A549 (cell line): ENCODE measurements at regions of chr7 and their contacts with region 1.

Region 1: GRCh38 chr7:31134246-31135188 is 82.4 kb downstream of the ADCYAP1R1 start:
- DNase-seq: peak; percentile 67 to 76
- ATAC-seq: peak; percentile 98 to 100
- H3K4me3 ChIP-seq: no peak overlapping the region
- H3K27ac ChIP-seq: no peak overlapping the region
- H3K4me1 ChIP-seq: no peaks in the 10 kb centered on the region
- CTCF ChIP-seq: peak; percentile 79
- EP300 ChIP-seq: no peak
- POLR2A ChIP-seq: no peak
- RAD21 ChIP-seq: peak; percentile 78 to 82

Region 2: GRCh38 chr7:30920584-30921539 is 213.7 kb before region 1 on chr7:
- CTCF ChIA-PET with region 1: no interaction called
- POLR2A ChIA-PET with region 1: no interaction called
- DNase-seq: peak in 1 of 2 experiments; percentile 27
- ATAC-seq: peak in 1 of 2 experiments; percentile 56; a peak in 3 of 6 replicates
- H3K4me3 ChIP-seq: no peak overlapping the region
- H3K27ac ChIP-seq: no peak overlapping the region
- H3K4me1 ChIP-seq: peaks cover 12% of the 10 kb centered on the region; the same call in 2 of the 3 replicates
- CTCF ChIP-seq: no peak
- EP300 ChIP-seq: no peak
- POLR2A ChIP-seq: no peak
- RAD21 ChIP-seq: no peak

Region 3: DNA sequence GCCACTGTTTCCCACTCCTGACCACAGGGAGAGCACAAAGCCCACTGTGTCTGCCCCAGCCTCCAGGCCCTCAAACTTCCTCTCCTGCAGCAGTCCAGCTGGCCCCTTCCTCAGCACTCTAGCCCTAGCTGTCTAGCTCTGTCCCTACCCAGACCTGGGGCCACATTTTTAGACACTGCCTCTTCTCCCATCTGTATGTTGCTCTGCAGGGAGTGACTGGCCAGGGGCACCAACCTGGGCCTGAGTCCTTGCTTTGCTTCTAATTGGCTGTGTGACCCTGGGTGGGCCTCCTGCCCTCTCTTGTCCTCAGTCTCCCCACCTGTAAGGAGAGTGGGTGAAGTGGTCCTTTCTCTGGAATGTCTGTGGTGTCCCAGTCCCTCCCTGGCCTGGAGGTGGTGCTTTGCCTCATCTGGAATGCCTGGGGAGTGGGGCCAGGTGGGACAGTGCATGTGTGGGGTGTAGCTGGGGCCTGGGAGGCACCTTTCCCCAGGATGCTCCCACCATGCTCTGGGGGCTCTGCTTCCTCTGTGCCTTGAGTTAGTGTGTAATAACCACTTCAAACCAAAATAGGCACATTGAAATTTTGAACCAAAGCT is 197.8 kb before region 1 on chr7:
- CTCF ChIA-PET with region 1: no interaction called
- POLR2A ChIA-PET with region 1: no interaction called
- DNase-seq: no peak
- ATAC-seq: no peak
- H3K4me3 ChIP-seq: no peak overlapping the region
- H3K27ac ChIP-seq: no peak overlapping the region
- H3K4me1 ChIP-seq: 0 out of 3 replicates have a peak, but pooled peaks cover 3% of the 10 kb centered on the region
- CTCF ChIP-seq: no peak
- EP300 ChIP-seq: no peak
- POLR2A ChIP-seq: no peak
- RAD21 ChIP-seq: no peak

Region 4: DNA sequence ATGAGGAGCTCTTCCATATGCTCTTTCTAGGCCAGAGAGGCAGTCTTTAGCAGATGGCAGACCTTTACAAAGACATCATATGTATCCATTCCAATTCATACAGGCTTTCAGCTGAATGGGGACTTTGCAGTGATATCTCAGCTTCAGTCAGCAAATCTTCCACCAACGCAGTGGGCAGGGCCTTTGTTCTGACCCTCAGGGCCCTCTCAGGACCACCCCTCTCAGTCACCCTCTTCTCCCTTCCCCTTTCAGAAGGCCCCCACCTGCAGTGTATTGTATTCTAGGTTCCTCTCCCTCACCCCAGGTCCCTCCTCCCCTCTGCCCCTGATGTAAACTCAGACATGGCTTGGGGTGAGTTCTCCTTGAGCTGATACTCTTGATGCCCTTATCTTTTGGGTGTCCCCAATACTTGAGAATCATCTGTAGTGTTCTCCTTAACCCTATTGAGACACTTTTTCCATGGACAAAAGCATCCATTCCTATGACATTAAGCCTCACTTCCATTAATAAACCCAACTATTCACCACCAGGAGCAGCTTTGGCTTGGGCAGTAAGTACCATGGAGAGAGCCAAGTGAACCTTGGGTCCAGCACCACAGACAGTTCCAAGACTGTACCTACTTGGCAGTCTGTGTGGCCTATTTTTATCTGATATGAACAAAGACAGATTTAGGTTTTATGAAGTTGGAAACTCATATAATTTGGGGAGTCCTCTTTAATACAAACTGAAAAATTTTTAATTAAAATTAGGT is 19.7 kb before region 1 on chr7:
- CTCF ChIA-PET with region 1: interaction called, 15 read pairs
- POLR2A ChIA-PET with region 1: no interaction called
- DNase-seq: peak in 1 of 2 experiments; percentile 26
- ATAC-seq: peak; percentile 54 to 68; a peak in 1 of 6 replicates
- H3K4me3 ChIP-seq: no peak overlapping the region
- H3K27ac ChIP-seq: no peak overlapping the region
- H3K4me1 ChIP-seq: no peaks in the 10 kb centered on the region
- CTCF ChIP-seq: no peak
- EP300 ChIP-seq: no peak
- POLR2A ChIP-seq: no peak
- RAD21 ChIP-seq: no peak

Region 5: GRCh38 chr7:31192986-31193385 is 58.5 kb after region 1 on chr7:
- CTCF ChIA-PET with region 1: interaction called, 16 read pairs
- POLR2A ChIA-PET with region 1: no interaction called
- DNase-seq: peak; percentile 61 to 66
- ATAC-seq: peak; percentile 100
- H3K4me3 ChIP-seq: no peak overlapping the region
- H3K27ac ChIP-seq: no peak overlapping the region
- H3K4me1 ChIP-seq: no peaks in the 10 kb centered on the region
- CTCF ChIP-seq: peak; percentile 76
- EP300 ChIP-seq: no peak
- POLR2A ChIP-seq: no peak
- RAD21 ChIP-seq: peak; percentile 85 to 86

Region 6: GRCh38 chr7:31234836-31235605 is 100.5 kb after region 1 on chr7:
- CTCF ChIA-PET with region 1: no interaction called
- POLR2A ChIA-PET with region 1: no interaction called
- DNase-seq: no peak
- ATAC-seq: no peak
- H3K4me3 ChIP-seq: no peak overlapping the region
- H3K27ac ChIP-seq: no peak overlapping the region
- H3K4me1 ChIP-seq: no peaks in the 10 kb centered on the region
- CTCF ChIP-seq: no peak
- EP300 ChIP-seq: no peak
- POLR2A ChIP-seq: no peak
- RAD21 ChIP-seq: no peak

Region 7: GRCh38 chr7:31633894-31634494 is 499.5 kb after region 1 on chr7:
- CTCF ChIA-PET with region 1: interaction called, 107 read pairs
- POLR2A ChIA-PET with region 1: no interaction called
- DNase-seq: peak; percentile 47 to 69
- ATAC-seq: peak; percentile 96
- H3K4me3 ChIP-seq: no peak overlapping the region
- H3K27ac ChIP-seq: no peak overlapping the region
- H3K4me1 ChIP-seq: no peaks in the 10 kb centered on the region
- CTCF ChIP-seq: peak; percentile 76
- EP300 ChIP-seq: no peak
- POLR2A ChIP-seq: no peak
- RAD21 ChIP-seq: peak; percentile 87 to 92

Region 8: DNA sequence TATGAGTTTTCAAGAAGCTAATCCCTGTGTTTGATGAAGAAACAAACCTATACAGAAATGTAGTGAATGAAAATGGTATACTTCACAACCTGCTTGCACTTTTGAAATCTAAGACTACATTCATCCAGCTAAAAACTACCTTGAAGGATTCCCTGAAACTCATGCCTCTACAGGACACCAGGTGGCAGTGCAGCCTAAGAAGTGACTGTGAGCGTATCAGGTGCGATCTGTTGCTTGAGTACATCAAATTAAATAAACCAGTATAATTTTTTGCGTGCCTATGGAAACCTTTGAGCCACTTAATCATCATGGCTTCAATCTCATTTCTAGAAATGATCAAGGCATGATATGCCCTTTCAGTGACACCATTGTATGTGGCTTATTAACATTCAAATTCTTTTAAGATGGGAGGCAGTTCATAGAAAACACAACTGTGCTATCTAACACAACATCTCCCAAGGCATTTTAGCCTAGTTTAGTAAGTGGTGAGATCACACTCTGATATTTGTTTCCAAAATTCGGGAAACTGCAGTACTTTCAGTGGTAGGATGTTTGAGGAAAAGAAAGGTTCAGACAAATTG is 609.9 kb after region 1 on chr7:
- CTCF ChIA-PET with region 1: interaction called, 13 read pairs
- POLR2A ChIA-PET with region 1: no interaction called
- DNase-seq: peak; percentile 44 to 82
- ATAC-seq: peak; percentile 77 to 93; a peak in 4 of 6 replicates
- H3K4me3 ChIP-seq: no peak overlapping the region
- H3K27ac ChIP-seq: peak overlapping the region in 1 of 2 experiments; percentile 11; a peak in 1 of 6 replicates
- H3K4me1 ChIP-seq: peaks cover 22% of the 10 kb centered on the region
- CTCF ChIP-seq: peak; percentile 96
- EP300 ChIP-seq: no peak
- POLR2A ChIP-seq: no peak
- RAD21 ChIP-seq: peak; percentile 99